ENCODE measurements at regions of chr1 and their contacts with region 1.

Region 1: DNA sequence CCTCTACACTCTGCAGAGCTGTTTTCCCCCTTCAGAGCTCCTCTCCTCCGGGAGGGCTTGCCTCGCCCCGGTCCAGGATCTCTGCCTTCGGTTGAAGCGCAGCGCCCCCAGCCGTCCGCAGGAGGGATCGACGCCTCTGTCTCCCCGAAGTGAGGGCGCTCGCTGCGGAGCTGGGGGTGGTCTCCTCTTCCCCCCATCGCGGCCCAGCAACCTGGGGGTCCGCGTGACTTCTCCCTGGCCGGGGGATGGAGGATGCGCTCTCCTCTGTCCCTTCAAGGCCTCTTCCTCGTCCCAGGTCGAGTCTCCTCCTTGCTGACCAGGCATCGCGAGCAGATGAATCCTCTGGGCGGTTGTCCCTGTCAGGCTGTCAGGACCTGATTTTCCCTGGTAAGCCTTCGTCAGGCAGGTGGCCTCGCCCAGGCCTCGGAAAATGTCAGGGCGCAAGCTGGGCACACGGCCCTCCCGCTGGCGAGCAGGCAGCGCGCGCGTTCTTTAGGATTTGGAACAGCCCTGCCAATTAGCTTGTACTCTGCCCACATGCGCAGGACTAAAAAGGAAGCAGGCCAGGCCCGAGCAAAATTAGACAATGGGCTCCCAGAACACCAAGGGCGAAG is 90.5 kb downstream of the EDEM3 start:
- DNase-seq: peak; percentile 82 to 93 (median 92)
- ATAC-seq: peak; percentile 94 to 95
- H3K4me3 ChIP-seq: peak overlapping the region; percentile 24
- H3K27ac ChIP-seq: no peak overlapping the region
- H3K4me1 ChIP-seq: no peaks in the 10 kb centered on the region
- H3K27me3 ChIP-seq: no peaks in the 10 kb centered on the region

Region 2: DNA sequence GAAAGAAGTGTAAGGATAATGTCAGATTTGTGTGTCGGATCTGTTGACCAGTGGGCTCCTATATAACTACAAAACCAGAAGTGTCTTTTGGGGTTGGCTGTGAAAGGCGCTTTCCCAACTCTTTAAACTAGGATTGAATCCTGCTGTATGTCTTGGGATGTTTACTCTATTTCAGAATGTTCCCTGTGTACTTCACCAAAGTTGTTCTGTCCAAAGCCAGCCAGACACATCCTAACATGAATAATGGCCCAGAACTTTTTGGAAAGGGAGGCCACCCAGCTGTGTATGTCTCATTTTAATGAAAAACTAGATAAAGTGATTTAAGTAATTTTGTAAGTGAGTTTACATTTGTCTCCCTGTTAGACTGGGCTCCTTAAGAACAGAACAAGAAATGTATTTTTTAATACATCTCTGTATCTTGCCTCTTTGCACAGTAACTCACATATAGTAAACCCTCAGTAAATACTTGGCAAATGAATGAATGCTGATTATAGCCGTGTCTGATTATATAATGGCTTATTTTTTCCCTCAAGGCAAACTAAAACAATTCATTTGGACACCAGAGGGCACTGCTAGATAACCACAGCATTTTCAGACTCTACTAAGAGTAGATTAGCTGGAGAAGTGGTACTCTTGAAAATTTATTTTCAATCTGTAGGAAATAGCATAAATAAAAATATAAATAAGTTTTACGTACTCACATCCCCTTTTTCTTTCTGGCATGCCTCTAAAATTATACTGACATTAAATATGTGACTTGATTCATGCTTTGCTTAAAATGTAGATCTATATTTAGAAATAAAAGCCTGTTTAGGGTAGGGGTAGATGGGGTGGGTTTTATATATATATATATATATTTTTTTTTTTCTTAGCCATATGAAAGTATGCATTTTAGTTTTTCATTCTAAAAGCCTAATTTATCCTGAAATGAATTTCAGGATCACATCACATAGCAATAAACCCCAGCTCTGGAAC is 588.8 kb before region 1 on chr1:
- intact Hi-C with region 1: loop called in 2 of 4 experiments (anchors 10 kb)
- DNase-seq: no peak
- ATAC-seq: peak; percentile 81 to 84
- H3K4me3 ChIP-seq: no peak overlapping the region
- H3K27ac ChIP-seq: no peak overlapping the region
- H3K4me1 ChIP-seq: no peaks in the 10 kb centered on the region
- H3K27me3 ChIP-seq: no peaks in the 10 kb centered on the region

Region 3: DNA sequence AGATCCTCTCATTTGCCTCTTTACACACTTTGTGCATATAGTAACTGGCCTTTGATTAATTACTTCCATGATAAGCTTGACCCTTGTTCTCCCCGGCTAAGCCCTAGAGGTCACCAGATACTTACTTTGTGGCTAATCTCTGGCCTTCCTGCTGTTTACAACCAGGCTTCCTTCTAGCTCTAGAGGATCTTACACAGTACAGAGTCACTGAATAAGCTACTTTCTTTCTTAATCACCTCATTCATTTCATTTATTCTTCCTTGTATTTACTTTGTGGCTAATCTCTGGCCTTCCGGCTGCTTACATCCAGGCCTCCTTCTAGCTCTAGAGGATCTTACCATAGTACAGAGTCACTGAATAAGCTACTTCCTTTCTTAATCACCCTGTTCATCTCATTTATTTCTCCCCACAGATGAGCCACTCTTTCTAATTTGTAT is 421.6 kb before region 1 on chr1:
- intact Hi-C with region 1: loop called in 1 of 4 experiments (anchors 10 kb)
- DNase-seq: no peak
- ATAC-seq: peak; percentile 84 to 91
- H3K4me3 ChIP-seq: no peak overlapping the region
- H3K27ac ChIP-seq: no peak overlapping the region
- H3K4me1 ChIP-seq: no peaks in the 10 kb centered on the region
- H3K27me3 ChIP-seq: no peaks in the 10 kb centered on the region

Region 4: DNA sequence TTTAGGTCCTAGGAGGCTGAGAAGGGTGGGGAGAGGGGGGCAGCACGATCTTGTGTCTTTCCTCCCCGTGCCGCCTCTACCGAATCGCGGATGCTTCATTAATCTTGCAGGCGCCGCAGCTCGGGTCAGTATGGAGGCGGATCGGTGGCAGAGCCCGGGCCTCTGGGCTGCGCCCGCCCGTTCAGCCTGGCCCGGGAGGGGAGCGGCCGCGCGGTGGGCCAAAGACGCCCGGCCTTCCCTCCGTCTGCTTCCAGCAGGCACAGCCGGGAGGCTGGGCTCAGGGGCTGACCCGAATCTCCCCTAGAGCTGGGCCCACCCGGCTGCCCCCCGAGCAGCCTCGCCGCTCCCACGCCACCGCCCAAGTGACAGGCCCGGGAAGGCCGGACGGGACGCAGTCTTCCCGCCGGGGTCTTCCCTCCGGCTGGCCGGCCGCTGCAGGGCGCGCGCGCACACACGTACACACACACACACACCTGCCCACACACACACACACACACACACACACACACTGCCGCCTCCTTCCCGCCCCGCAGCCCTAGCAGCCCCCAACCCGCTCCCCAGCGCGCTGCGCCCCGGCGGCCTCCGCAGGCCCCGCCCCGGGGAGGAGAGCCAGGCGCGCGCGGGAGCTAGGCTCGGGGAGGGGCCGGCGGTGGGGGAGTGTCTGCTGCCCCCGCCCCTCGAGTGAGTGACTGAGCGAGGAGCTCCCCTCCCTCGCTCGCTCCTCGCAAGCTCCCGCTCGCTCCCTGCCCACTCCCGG is 277.7 kb before region 1 on chr1 and contains the start of gene C1orf21:
- intact Hi-C with region 1: loop called in 2 of 4 experiments (anchors 5 to 10 kb)
- DNase-seq: peak; percentile 93 to 97 (median 96)
- ATAC-seq: peak; percentile 97 to 98
- H3K4me3 ChIP-seq: peak within 1 kb of the TSS; percentile 88
- H3K27ac ChIP-seq: peak within 1 kb of the TSS; percentile 95
- H3K4me1 ChIP-seq: peaks cover 2% of the 10 kb centered on the region
- H3K27me3 ChIP-seq: no peaks in the 10 kb centered on the region
- total RNA-seq, gene C1orf21: 70.4 to 93.5 (median 78.9) TPM

Region 5: GRCh38 chr1:184574588-184574987 is 89.6 kb before region 1 on chr1:
- intact Hi-C with region 1: loop called in 3 of 4 experiments (anchors 10 kb)
- DNase-seq: peak in 1 of 3 donors; percentile 50
- ATAC-seq: peak in 1 of 2 donors; percentile 50
- H3K4me3 ChIP-seq: no peak overlapping the region
- H3K27ac ChIP-seq: no peak overlapping the region
- H3K4me1 ChIP-seq: no peaks in the 10 kb centered on the region
- H3K27me3 ChIP-seq: no peaks in the 10 kb centered on the region

Region 6: DNA sequence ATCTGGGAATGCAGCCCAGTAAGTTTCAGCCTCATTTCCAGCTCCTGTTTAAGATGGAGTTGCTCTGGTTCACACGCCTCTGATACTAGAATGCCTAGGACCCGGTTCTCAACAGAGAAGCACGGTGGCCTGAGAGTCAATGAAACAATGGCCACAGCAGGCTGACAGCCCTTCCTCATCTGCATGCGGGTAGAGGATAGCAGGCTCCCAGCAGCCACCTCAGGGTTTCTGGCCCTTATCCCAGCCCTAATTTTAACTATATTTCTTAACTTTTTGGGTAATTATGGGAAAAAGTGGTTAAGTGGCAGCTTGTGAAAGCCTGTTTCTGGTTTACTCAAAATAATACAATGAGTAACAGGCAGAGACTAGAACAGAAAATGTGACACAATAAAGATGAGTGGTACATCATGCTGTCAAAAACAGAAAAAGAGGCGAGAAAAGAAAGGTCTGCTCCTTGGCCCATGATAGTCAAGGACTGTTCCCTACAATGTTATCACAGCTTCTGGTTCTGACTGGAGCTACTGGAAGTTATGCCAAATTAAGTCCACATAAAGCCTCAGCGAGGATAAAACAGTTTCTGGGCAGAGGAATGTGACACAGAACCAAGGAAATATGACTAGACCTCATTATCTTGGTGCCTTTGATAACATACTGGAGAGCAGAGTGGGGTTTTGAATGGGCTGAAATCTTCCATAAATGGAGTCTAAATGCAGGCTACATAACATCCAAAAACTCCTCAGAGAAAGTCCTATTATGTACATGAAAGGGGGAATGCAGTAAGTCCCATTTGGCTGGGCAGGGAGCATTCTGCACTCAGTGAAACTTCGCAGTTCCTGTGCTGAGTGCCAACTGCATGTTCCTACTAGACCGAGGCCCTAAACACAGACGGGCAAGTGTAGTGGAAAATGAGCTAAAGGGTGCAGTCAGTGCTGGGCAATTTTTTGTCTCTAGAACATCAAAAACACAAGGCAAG is 218.1 kb after region 1 on chr1:
- intact Hi-C with region 1: no loop called
- DNase-seq: peak; percentile 57 to 76 (median 60)
- ATAC-seq: peak; percentile 78 to 85
- H3K4me3 ChIP-seq: no peak overlapping the region
- H3K27ac ChIP-seq: peak overlapping the region; percentile 94
- H3K4me1 ChIP-seq: peaks cover 5% of the 10 kb centered on the region
- H3K27me3 ChIP-seq: no peaks in the 10 kb centered on the region